ENCODE measurements at regions of chr11 and their contacts with region 1.

Region 1: GRCh38 chr11:78268591-78269410 is 80.1 kb downstream of the USP35 start:
- DNase-seq: peak; percentile 65
- ATAC-seq: peak; percentile 94

Region 2: DNA sequence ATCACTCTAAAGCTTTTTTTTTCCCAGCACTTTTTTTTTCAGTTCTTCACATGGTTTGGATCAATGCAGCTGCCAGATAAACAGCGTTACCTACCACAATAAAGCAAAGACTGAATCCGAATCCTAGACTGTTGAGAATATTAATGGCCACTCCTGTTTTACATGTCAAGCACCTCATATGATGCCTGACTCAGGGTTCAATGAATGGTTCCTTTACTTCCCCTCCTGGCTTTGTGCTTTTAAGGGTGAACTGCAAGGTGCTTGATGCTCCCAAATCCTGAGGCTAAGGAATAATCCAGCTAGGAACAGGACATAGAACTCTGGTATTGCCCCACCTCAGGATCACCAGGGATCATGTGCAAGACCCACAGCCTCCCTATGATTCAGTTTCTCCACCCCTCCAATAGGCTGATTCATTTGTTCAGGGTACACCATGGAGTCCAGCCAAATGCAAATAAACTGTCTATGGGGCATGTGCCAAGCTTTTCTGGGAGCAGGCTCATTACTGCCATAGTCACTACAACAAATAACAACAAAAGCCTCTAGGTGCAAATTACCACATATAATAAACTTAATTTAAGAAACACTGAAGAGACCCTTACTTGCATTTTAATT is 44.5 kb after region 1 on chr11:
- intact Hi-C with region 1: loop called (anchors 2 kb)
- DNase-seq: no peak
- ATAC-seq: peak; percentile 50

Region 3: DNA sequence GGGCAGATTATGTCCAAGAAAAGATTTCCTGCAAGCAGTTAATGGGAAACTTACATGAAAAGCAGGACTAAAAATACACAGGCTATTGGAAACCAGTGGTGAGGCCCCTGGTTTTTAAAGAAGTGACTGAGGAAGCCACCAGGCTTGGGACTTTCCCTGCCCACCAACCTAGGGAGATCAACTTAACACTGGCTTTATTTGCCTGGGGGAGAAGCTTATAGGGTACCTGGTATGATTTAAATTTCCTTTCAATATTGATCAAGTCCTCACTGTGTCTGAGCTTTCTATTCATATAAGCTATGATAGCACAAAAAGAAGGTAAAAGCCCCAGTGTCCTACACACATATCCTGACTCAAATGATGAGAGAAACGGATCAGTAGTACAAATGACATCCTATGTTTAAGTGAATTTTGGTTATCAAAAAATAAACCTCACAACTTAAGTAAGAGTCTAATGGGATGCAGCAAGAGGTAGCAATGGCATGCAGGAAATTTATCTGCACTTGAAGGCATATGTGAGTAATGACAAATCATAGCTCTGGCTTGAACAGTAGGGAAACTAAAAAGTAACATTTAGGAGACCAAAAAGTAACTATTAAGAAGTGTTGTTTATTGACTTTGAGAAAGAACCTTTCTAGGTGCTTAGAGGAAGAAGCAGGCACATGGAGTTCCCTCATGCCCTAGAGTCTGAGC is 63.5 kb after region 1 on chr11:
- intact Hi-C with region 1: no loop called
- DNase-seq: no peak
- ATAC-seq: no peak